Vagina (tissue), 2 donors: ENCODE measurements at regions of chr1 and their contacts with region 1.

Region 1: DNA sequence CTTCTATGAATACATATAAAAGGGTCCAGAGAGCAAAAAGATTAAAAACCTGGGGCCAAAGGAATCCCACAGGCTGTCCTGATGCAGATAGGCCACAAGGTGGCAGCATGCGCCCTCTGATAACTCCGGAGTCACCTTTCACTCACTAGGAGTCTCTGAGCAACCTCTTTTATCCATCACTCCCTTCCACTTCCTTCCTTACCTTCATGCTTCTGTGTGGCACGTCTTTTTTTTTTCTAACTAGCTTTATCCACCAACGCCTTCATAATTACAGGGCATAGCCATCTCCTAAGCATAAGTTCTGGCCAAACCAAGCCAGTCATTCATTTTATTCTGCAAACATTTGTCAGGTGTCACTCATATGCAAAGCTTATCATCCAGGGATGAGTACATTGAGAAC is 3.9 kb upstream of the PGLYRP4 start:
- DNase-seq: peak; percentile 31 to 42
- H3K4me3 ChIP-seq: no peak overlapping the region
- H3K27ac ChIP-seq: no peak overlapping the region
- H3K4me1 ChIP-seq: no peaks in the 10 kb centered on the region
- H3K27me3 ChIP-seq: no peaks in the 10 kb centered on the region
- CTCF ChIP-seq: peak; percentile 76 to 85 (median 78)
- POLR2A ChIP-seq: no peak

Region 2: GRCh38 chr1:153302308-153302707 is 50.2 kb before region 1 on chr1:
- intact Hi-C with region 1: no loop called
- DNase-seq: peak in 1 of 2 donors; percentile 65
- H3K4me3 ChIP-seq: no peak overlapping the region
- H3K27ac ChIP-seq: no peak overlapping the region
- H3K4me1 ChIP-seq: no peaks in the 10 kb centered on the region
- H3K27me3 ChIP-seq: no peaks in the 10 kb centered on the region
- CTCF ChIP-seq: no peak
- POLR2A ChIP-seq: no peak

Region 3: DNA sequence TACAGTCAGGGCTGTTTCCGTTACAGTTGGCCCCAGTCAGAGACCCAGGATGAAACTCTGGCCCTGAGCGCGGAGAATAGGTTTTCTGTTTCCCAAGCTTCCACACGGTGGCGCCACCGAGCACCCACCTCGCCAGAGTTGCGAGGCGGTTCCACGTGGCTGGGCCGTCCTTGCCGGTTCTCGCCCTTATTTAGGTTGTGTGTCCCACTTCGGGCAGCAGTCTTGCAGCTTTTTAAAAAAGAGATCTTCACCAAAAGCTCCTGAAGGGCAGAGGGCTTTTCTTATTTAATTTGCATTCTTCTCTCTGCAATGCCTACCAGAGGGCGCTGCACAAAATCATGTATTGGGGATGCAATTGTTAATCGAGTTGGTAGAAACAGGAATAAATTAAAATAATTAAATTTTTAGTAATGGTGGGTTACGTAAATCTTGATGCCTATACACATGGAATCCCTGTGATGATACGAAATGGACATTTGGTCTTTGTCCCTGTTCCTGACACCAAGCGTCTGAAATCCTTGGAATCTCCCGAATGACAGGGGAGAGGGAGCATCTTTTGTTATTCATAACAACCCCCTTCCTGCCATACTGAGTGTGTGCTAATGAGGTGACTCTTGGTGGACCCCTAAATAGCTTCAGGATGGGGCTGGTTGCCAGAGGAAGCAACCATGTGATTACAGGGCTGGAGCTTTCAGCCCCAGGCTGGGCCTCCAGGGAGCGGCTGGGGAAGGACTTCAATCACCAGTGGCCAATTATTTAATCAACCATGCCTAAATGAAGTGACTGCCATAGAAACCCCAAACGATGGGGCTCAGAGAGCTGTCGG is 113.5 kb after region 1 on chr1:
- intact Hi-C with region 1: loop called (anchors 10 kb)
- DNase-seq: no peak
- H3K4me3 ChIP-seq: no peak overlapping the region
- H3K27ac ChIP-seq: no peak overlapping the region
- H3K4me1 ChIP-seq: peaks cover 9% of the 10 kb centered on the region
- H3K27me3 ChIP-seq: no peaks in the 10 kb centered on the region
- CTCF ChIP-seq: peak; percentile 45 to 74 (median 66)
- POLR2A ChIP-seq: no peak

Region 4: GRCh38 chr1:153494976-153495535 is 142.5 kb after region 1 on chr1:
- intact Hi-C with region 1: loop called (anchors 2 kb)
- DNase-seq: no peak
- H3K4me3 ChIP-seq: no peak overlapping the region
- H3K27ac ChIP-seq: no peak overlapping the region
- H3K4me1 ChIP-seq: peaks cover 36% of the 10 kb centered on the region
- H3K27me3 ChIP-seq: no peaks in the 10 kb centered on the region
- CTCF ChIP-seq: peak; percentile 82 to 98 (median 98)
- POLR2A ChIP-seq: no peak